ENCODE measurements at regions of chr22 and their contacts with region 1.

Region 1: DNA sequence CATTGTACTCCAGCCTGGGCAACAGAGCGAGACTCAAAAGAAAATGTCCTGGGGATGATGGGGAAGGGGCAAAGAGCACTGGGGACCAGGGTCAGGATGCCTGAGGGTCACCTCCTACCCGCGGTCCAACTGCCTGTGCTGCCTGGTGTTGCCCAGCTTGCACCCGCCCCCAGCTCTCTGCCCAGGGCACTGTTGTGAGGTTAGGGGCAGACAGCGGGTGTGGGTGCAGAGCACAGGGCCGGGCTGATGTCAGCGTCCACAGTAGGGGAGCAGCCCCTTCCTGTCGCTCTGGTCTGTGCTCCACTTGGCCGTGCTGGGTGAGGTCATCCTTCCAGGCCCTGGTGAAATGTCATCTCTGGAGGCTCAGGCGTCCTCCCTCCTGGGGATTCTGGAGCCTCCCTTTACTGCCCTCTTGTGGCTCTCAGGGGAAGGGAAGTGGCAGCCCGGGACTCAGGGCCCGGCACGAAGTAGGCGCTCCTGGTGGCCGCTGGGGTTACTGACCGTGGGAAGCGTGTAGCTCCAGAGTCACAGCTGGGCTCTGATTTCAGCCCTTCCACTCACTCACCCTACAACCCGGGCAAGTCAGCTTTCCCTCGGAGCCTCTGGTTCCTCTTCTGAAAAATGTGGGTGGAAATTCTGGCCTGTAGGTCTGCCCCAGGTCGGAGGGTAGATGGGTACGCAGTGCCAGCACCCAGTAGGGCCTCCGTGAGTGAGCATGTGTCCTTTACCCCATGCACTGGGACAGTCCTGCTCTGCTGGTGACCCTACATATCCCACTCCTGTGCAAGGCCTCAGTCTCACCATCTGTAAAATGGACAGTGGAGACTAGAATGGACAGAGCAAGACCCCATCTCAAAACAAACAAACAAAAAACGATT is 17.3 kb upstream of the PRR5 start:
- DNase-seq: peak; percentile 89
- H3K4me3 ChIP-seq: no peak overlapping the region
- H3K27me3 ChIP-seq: no peaks in the 10 kb centered on the region
- CTCF ChIP-seq: peak; percentile 100

Region 2: GRCh38 chr22:44625981-44626687 is 58.6 kb before region 1 on chr22:
- CTCF ChIA-PET with region 1: interaction called, 11 read pairs
- POLR2A ChIA-PET with region 1: no interaction called
- DNase-seq: no peak
- H3K4me3 ChIP-seq: no peak overlapping the region
- H3K27me3 ChIP-seq: 0 out of 2 replicates have a peak, but pooled peaks cover 1% of the 10 kb centered on the region
- CTCF ChIP-seq: peak; percentile 86

Region 3: GRCh38 chr22:44669561-44669976 is 15.2 kb before region 1 on chr22:
- CTCF ChIA-PET with region 1: interaction called, 21 read pairs
- POLR2A ChIA-PET with region 1: interaction called, 4 read pairs
- DNase-seq: no peak
- H3K4me3 ChIP-seq: peak overlapping the region; percentile 74
- H3K27me3 ChIP-seq: peaks cover 3% of the 10 kb centered on the region
- CTCF ChIP-seq: peak; percentile 80

Region 4: DNA sequence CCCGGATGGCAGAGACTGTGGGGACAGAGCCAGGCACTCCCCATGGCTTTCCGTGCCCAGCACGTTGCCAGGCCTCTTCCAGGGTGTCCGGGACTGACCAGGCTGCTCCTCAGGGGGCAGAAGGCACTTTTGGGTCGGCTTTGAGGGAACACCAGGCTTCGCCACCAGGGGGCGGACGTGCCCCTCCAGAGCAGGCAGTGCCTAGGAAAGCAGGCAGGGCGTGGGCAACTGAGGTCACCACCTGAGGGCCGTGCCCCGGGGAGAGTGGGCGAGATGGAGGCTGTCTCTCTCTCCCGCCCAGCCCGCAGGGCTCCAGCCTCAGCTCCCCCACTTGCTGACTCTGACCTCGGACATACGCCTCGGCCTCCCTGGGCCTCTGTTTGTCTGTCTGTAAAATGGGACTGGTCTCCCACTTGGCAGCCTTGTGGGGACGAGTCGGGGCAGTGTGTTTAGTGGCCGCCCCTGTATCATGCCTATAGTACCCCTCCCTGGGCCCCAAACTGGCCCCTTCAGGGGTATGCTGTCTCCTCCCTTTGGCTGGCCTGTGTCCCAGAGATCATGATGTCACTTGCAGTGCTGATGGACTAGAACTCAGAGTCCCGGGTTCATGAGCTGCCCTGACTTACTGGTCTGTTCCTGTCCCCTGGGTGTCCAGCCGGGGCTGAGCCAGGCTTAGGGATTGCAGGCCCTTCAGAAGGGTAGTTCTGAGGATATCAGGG is 12.8 kb after region 1 on chr22:
- CTCF ChIA-PET with region 1: interaction called, 75 read pairs
- POLR2A ChIA-PET with region 1: interaction called, 4 read pairs
- DNase-seq: no peak
- H3K4me3 ChIP-seq: no peak overlapping the region
- H3K27me3 ChIP-seq: no peaks in the 10 kb centered on the region
- CTCF ChIP-seq: peak; percentile 95

Region 5: DNA sequence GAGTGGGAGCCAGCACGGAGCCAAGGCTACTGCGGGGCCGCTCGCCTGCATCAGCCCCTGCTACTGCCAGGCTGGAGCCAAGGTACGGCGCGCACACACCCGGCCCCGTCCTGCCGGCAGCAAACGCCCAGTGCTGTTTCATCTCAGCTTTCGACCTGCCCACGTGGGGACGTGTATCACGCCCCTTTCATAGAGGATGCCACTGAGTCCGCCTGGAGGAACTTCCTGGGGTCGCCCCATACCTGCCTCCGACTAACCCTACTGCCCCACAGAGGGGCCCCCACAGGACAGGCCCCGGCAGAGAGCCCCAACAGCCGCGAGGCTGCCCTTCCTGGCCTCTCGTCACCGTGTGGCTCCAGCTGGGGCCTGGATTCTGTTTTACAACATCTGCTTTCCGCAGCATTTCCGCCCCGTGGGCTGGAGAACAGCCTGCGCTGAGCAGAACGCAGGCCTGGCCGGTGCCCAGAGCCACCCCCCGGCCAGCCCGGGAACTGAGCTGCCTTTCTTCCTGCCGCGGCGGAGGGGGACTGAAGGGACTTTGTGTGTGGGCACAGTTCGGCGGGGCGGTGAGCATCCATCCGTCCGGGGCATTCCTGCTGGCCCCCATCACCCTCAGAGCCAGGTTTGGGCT is 44.8 kb after region 1 on chr22:
- CTCF ChIA-PET with region 1: interaction called, 27 read pairs
- POLR2A ChIA-PET with region 1: no interaction called
- DNase-seq: peak; percentile 24
- H3K4me3 ChIP-seq: no peak overlapping the region
- H3K27me3 ChIP-seq: no peaks in the 10 kb centered on the region
- CTCF ChIP-seq: peak; percentile 63

Region 6: DNA sequence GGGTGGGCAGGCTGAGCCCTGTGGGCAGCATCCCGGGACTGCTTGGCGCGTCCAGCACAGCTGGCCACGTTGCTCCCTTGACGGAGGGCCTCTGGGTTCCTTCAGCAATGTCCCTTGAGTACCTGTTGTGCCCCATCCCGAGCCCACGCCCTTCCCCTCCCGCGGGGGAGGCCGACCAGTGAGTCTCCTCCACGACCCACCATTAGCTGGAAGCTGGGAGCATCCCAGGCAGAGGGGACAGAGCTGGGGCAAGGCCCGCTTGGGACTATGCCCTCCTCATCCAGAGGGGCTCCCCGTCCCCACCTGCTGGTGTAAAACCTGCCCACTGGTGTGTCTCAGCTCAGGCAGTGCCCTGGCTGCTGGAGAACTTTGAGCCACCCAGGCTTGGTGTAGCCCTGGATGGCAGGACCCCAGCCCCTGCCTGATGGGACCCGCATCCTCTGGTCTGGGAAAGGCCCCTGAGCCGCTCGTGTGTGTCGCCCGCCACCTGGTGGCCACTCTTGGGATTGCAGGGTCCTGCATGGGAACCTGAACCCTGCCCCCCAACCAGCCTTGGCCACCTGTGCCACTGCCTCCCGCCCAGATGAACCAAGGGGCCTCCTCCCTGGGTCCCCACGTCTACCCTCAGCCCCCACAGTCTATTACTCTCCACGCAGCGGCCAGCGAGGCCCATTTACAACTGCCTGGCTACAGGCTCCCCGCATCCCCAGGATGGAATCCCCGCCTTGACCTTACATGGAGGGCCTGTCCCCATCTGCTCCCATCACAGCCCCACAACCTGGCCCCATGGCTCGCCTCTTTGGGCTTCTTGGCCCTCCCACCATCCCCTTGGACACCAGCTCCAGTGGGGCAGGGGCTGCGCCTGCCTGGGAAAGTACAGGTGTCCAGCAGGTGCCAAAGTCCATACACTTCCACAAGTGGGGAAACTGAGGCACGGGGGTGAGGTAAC is 51.1 kb after region 1 on chr22:
- CTCF ChIA-PET with region 1: interaction called, 27 read pairs
- POLR2A ChIA-PET with region 1: no interaction called
- DNase-seq: no peak
- H3K4me3 ChIP-seq: no peak overlapping the region
- H3K27me3 ChIP-seq: no peaks in the 10 kb centered on the region
- CTCF ChIP-seq: peak; percentile 97

Region 7: DNA sequence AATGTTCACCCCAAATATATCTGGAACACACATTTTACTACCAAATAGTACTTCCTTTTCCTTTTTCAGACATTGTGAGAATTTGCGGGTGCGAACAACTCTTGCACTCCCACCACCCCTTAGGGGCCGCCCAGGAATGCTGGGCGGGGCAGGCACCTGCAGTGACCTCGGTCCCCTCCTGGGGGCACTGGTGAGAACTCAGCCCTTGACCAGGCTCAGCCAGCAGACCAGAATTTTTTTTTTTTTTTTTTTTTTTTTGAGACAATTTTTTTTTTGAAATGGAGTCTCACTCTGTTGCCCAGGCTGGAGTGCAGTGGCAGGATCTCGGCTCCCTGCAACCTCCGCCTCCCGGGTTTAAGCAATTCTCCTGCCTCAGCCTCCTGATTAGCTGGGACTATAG is 143.4 kb after region 1 on chr22:
- CTCF ChIA-PET with region 1: no interaction called
- POLR2A ChIA-PET with region 1: no interaction called
- DNase-seq: no peak
- H3K4me3 ChIP-seq: no peak overlapping the region
- H3K27me3 ChIP-seq: peaks cover 3% of the 10 kb centered on the region
- CTCF ChIP-seq: peak; percentile 51

Region 8: DNA sequence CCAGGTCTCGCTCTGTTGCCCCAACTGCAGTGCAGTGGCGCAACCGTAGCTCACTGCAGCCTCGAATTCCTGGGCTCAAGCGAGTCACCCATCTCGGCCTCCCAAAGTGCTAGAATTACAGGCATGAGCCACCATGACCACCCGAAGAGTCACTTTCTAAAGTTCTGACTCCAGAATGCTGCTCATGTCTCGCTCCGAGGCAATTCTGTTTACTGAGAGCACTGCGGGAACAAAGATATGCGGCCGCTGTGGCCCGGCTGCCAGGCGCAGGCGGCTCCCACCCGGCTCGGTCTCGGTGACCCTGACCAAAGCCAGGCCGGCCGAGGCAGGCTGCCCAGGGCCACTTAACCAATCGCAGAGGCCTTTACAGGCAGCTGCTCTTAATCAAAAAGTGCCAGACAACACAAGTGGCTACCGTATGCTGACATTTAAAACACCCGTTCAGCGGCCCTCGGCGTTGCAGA is 246.4 kb after region 1 on chr22:
- CTCF ChIA-PET with region 1: no interaction called
- POLR2A ChIA-PET with region 1: no interaction called
- DNase-seq: no peak
- H3K4me3 ChIP-seq: no peak overlapping the region
- H3K27me3 ChIP-seq: peaks cover 12% of the 10 kb centered on the region
- CTCF ChIP-seq: no peak